ENCODE measurements at regions of chr20 and their contacts with region 1.

Region 1: GRCh38 chr20:31723319-31724078 is 831 bp upstream of the BCL2L1 start:
- DNase-seq: peak; percentile 99
- ATAC-seq: peak; percentile 81
- H3K4me3 ChIP-seq: peak overlapping the region; percentile 78 to 91 (median 87)
- H3K27ac ChIP-seq: peak overlapping the region; percentile 92
- H3K4me1 ChIP-seq: peaks cover 57% of the 10 kb centered on the region
- H3K27me3 ChIP-seq: no peaks in the 10 kb centered on the region; a peak in 1 of 5 replicates
- CTCF ChIP-seq: peak; percentile 99
- EP300 ChIP-seq: peak; percentile 17 to 54; a peak in 3 of 4 replicates
- POLR2A ChIP-seq: peak; percentile 75 to 77
- RAD21 ChIP-seq: peak; percentile 99

Region 2: GRCh38 chr20:31527266-31527665 is 196.2 kb before region 1 on chr20:
- CTCF ChIA-PET with region 1: no interaction called
- POLR2A ChIA-PET with region 1: no interaction called
- in situ Hi-C with region 1: no loop called
- intact Hi-C with region 1: no loop called
- DNase-seq: no peak
- ATAC-seq: no peak
- H3K4me3 ChIP-seq: no peak overlapping the region
- H3K27ac ChIP-seq: no peak overlapping the region
- H3K4me1 ChIP-seq: no peaks in the 10 kb centered on the region
- H3K27me3 ChIP-seq: no peaks in the 10 kb centered on the region
- CTCF ChIP-seq: no peak
- EP300 ChIP-seq: no peak
- POLR2A ChIP-seq: no peak
- RAD21 ChIP-seq: no peak

Region 3: GRCh38 chr20:31548823-31549512 is 174.5 kb before region 1 on chr20:
- CTCF ChIA-PET with region 1: no interaction called
- POLR2A ChIA-PET with region 1: no interaction called
- in situ Hi-C with region 1: no loop called
- intact Hi-C with region 1: no loop called
- DNase-seq: no peak
- ATAC-seq: no peak
- H3K4me3 ChIP-seq: peak overlapping the region in 1 of 3 experiments; percentile 72; a peak in 2 of 6 replicates
- H3K27ac ChIP-seq: peak overlapping the region; percentile 92
- H3K4me1 ChIP-seq: peaks cover 26% of the 10 kb centered on the region
- H3K27me3 ChIP-seq: no peaks in the 10 kb centered on the region
- CTCF ChIP-seq: no peak
- EP300 ChIP-seq: no peak
- POLR2A ChIP-seq: peak in 1 of 2 experiments; percentile 34; a peak in 2 of 4 replicates
- RAD21 ChIP-seq: no peak

Region 4: DNA sequence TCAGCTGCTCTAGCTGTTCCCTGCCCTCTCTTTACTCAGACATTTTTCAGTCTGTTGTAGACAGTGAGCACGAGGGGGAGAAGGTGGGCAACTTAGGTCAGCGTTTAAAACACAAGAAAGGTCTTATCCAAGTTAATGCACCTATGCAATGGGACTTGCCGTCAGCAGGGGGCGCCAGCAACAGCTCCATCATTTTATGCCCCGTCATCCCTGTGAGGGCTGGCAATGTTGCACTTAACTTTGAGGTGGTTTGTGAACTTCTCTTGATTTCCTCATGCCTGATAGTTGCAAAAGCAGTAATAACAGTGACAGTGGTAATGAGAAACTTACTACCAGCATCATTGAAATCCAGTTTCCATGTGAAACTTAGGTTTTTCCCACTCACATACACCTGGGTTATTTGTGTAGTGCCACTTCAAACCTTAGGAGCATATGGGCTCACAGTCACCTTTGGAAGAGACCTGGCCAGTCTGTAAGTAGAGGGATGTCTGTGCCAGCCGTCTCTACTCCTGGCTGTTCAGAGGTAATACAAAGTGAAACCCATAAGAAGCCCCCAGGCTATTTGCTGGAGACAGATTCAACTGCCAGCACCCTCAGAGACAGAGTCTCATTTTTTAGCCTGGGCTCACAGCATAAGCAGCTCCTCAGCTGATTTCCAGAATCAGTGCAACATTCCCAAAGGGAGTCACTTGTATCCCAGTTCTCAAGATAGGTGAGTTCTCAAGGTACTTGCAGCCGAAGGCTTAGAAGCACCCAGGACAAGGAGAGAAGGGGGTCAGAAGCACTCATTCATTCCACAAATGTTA is 163.2 kb before region 1 on chr20:
- CTCF ChIA-PET with region 1: no interaction called
- POLR2A ChIA-PET with region 1: interaction called, 3 read pairs
- in situ Hi-C with region 1: loop called (anchors 10 kb)
- intact Hi-C with region 1: loop called (anchors 2 kb)
- DNase-seq: peak; percentile 83
- ATAC-seq: peak; percentile 51
- H3K4me3 ChIP-seq: no peak overlapping the region
- H3K27ac ChIP-seq: peak overlapping the region; percentile 65
- H3K4me1 ChIP-seq: peaks cover 31% of the 10 kb centered on the region
- H3K27me3 ChIP-seq: no peaks in the 10 kb centered on the region
- CTCF ChIP-seq: peak; percentile 95
- EP300 ChIP-seq: peak in 1 of 2 experiments; percentile 33; a peak in 1 of 4 replicates
- POLR2A ChIP-seq: no peak
- RAD21 ChIP-seq: peak; percentile 85

Region 5: GRCh38 chr20:31605031-31605901 is 118.2 kb before region 1 on chr20 and contains the start of gene ID1:
- CTCF ChIA-PET with region 1: no interaction called
- POLR2A ChIA-PET with region 1: interaction called, 174 read pairs
- in situ Hi-C with region 1: no loop called
- intact Hi-C with region 1: loop called (anchors 5 kb)
- DNase-seq: peak; percentile 99
- ATAC-seq: peak; percentile 58
- H3K4me3 ChIP-seq: peak within 1 kb of the TSS; percentile 81 to 99 (median 95)
- H3K27ac ChIP-seq: peak within 1 kb of the TSS; percentile 98
- H3K4me1 ChIP-seq: peaks cover 53% of the 10 kb centered on the region
- H3K27me3 ChIP-seq: no peaks in the 10 kb centered on the region; a peak in 1 of 5 replicates
- CTCF ChIP-seq: peak; percentile 8; the same call in 1 of the 2 replicates
- EP300 ChIP-seq: peak in 1 of 2 experiments; percentile 59; a peak in 2 of 4 replicates
- POLR2A ChIP-seq: peak in 1 of 2 experiments; percentile 100; a peak in 2 of 4 replicates
- RAD21 ChIP-seq: peak; percentile 60
- total RNA-seq, gene ID1: 315 and 419 TPM in 2 replicates

Region 6: DNA sequence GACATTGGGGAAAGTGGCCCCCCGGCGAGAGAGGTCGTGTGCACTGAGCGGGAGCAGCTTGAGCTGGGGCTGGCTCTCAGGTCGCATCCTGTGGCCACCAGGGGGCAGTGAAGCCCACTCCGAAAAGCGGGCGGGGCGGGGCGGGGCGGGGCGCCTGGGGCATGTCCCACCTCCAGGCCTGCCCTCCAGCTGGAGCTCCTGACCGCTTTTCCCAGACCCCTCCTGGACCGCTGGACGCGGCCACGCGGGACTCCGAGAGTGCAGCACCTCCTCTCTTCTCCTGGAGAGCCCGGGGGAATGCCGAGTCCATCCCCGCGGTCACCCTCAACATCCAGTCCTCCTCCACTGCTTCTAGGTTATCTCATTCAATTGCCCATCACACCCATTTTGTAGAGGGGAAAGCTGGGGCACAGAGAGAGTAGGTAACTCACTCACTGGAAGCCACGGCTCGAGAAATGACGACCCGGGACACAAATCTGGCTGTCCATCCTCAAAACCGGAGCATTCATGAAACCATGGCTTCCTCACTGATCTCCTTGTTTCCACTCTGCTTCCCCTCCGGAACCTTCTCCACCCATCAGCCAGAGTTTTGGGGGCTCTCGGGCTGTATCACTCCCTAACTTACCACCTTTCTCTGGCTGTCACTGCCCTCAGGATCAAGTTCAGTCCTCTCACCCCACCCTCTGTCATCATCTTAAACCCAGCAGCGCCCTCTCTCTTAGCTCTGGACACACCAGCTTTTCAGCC is 61.7 kb before region 1 on chr20:
- CTCF ChIA-PET with region 1: interaction called, 100 read pairs
- POLR2A ChIA-PET with region 1: interaction called, 1,981 read pairs
- in situ Hi-C with region 1: loop called (anchors 5 kb)
- intact Hi-C with region 1: loop called (anchors 1 kb)
- DNase-seq: peak; percentile 76
- ATAC-seq: peak; percentile 36
- H3K4me3 ChIP-seq: peak overlapping the region; percentile 20 to 66 (median 40)
- H3K27ac ChIP-seq: peak overlapping the region; percentile 41
- H3K4me1 ChIP-seq: peaks cover 64% of the 10 kb centered on the region
- H3K27me3 ChIP-seq: no peaks in the 10 kb centered on the region
- CTCF ChIP-seq: peak; percentile 91
- EP300 ChIP-seq: no peak
- POLR2A ChIP-seq: peak; percentile 56 to 87; a peak in 3 of 4 replicates
- RAD21 ChIP-seq: peak; percentile 91; the same call in 1 of the 2 replicates

Region 7: GRCh38 chr20:31698803-31699718 is 24.4 kb before region 1 on chr20:
- CTCF ChIA-PET with region 1: interaction called, 7 read pairs
- POLR2A ChIA-PET with region 1: interaction called, 2,822 read pairs
- in situ Hi-C with region 1: no loop called
- intact Hi-C with region 1: loop called (anchors 1 kb)
- DNase-seq: peak; percentile 76
- ATAC-seq: peak; percentile 15
- H3K4me3 ChIP-seq: no peak overlapping the region
- H3K27ac ChIP-seq: peak overlapping the region; percentile 83
- H3K4me1 ChIP-seq: peaks cover 100% of the 10 kb centered on the region
- H3K27me3 ChIP-seq: no peaks in the 10 kb centered on the region
- CTCF ChIP-seq: no peak
- EP300 ChIP-seq: peak in 1 of 2 experiments; percentile 71; a peak in 2 of 4 replicates
- POLR2A ChIP-seq: peak in 1 of 2 experiments; percentile 33; a peak in 1 of 4 replicates
- RAD21 ChIP-seq: no peak

Region 8: GRCh38 chr20:31712564-31713311 is 10.8 kb before region 1 on chr20:
- CTCF ChIA-PET with region 1: no interaction called
- POLR2A ChIA-PET with region 1: interaction called, 2,822 read pairs
- in situ Hi-C with region 1: no loop called
- intact Hi-C with region 1: loop called (anchors 1 kb)
- DNase-seq: peak; percentile 95
- ATAC-seq: peak; percentile 61
- H3K4me3 ChIP-seq: peak overlapping the region in 2 of 3 experiments; percentile 2 to 29; a peak in 2 of 6 replicates
- H3K27ac ChIP-seq: peak overlapping the region; percentile 61
- H3K4me1 ChIP-seq: peaks cover 99% of the 10 kb centered on the region
- H3K27me3 ChIP-seq: no peaks in the 10 kb centered on the region
- CTCF ChIP-seq: no peak
- EP300 ChIP-seq: peak in 1 of 2 experiments; percentile 92; a peak in 3 of 4 replicates
- POLR2A ChIP-seq: peak in 1 of 2 experiments; percentile 39; a peak in 1 of 4 replicates
- RAD21 ChIP-seq: no peak

Region 9: DNA sequence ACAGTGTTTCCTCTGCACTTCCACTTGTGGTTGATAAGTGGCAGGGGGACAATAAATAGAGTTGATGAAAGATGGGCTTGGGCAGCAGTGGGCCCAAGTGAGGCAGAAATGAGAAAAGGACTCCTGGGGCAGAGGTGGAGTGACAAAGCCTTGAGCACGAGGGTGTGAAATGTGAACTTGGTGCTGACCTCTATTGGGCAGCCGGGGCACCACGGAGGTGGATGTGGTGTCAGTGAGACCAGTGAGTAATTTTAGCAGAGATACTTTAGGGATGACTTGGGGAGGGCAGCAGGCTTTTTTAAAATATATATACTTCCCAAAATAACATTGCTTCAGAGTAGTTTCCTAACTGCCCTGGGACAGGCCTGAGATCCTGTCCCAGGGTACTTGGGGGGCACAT is 65.1 kb after region 1 on chr20:
- CTCF ChIA-PET with region 1: no interaction called
- POLR2A ChIA-PET with region 1: no interaction called
- in situ Hi-C with region 1: no loop called
- intact Hi-C with region 1: loop called (anchors 1 kb)
- DNase-seq: no peak
- ATAC-seq: peak; percentile 80
- H3K4me3 ChIP-seq: no peak overlapping the region
- H3K27ac ChIP-seq: no peak overlapping the region
- H3K4me1 ChIP-seq: no peaks in the 10 kb centered on the region
- H3K27me3 ChIP-seq: no peaks in the 10 kb centered on the region
- CTCF ChIP-seq: peak; percentile 43; the same call in 1 of the 2 replicates
- EP300 ChIP-seq: no peak
- POLR2A ChIP-seq: no peak
- RAD21 ChIP-seq: no peak

Measured in HepG2 (cell line).